ENCODE measurements at regions of chr17 and their contacts with region 1.

Region 1: GRCh38 chr17:67818110-67819002 is 6.9 kb upstream of the BPTF start:
- DNase-seq: no peak
- H3K4me3 ChIP-seq: no peak overlapping the region
- H3K27ac ChIP-seq: no peak overlapping the region
- H3K4me1 ChIP-seq: no peaks in the 10 kb centered on the region
- H3K27me3 ChIP-seq: no peaks in the 10 kb centered on the region
- CTCF ChIP-seq: no peak

Region 2: GRCh38 chr17:67573987-67574657 is 244.2 kb before region 1 on chr17:
- CTCF ChIA-PET with region 1: interaction called, 10 read pairs
- dilution Hi-C with region 1: no loop called
- in situ Hi-C with region 1: no loop called
- intact Hi-C with region 1: no loop called
- DNase-seq: no peak
- H3K4me3 ChIP-seq: no peak overlapping the region
- H3K27ac ChIP-seq: no peak overlapping the region
- H3K4me1 ChIP-seq: no peaks in the 10 kb centered on the region
- H3K27me3 ChIP-seq: no peaks in the 10 kb centered on the region
- CTCF ChIP-seq: no peak

Region 3: DNA sequence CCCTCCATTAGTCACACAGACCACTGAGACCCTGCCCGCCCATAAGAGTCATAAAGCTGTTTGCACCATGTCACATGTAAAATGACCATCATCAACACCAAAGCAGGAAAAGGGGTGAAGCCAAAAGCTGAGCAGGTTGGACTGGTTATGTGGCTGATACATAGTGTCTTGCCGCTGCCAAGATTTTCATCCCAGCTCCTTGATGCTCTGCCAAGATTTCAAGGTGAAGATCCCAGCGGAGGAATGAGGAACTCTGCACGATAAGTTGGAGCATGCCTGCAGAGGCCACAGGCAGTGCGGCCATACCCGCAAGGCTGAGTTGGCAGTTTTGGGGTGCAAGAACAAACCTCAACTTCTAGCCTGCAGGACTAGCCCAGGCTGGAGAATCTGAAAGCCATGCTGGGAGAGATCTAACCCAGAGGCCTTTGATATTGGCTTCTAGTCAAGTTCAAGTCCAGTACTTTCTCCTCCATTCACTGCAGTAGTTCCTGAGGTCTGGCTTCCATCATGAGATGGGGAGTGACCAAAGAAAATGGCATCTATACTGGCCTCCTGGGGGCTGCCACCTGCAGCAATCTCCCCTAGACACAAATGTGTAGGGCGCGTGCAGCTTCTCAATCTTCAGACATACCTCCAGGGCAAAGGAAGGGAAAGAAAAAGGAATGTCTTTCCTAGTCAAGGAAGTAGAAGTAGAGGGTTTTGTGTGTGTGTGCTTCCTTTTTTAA is 180.3 kb before region 1 on chr17:
- CTCF ChIA-PET with region 1: no interaction called
- dilution Hi-C with region 1: no loop called
- in situ Hi-C with region 1: no loop called
- intact Hi-C with region 1: no loop called
- DNase-seq: peak; percentile 99
- H3K4me3 ChIP-seq: no peak overlapping the region
- H3K27ac ChIP-seq: peak overlapping the region; percentile 32
- H3K4me1 ChIP-seq: peaks cover 26% of the 10 kb centered on the region
- H3K27me3 ChIP-seq: no peaks in the 10 kb centered on the region
- CTCF ChIP-seq: no peak

Measured in mammary epithelial cell (primary cell).